ENCODE measurements at regions of chr4 and their contacts with region 1.

Region 1: GRCh38 chr4:10151182-10151581 is 34.6 kb upstream of the WDR1 start:
- DNase-seq: peak; percentile 86
- ATAC-seq: peak; percentile 94
- H3K4me3 ChIP-seq: no peak overlapping the region
- H3K4me3 Mint-ChIP-seq: peak overlapping the region; percentile 17
- H3K27ac ChIP-seq: no peak overlapping the region
- H3K27ac Mint-ChIP-seq: peak overlapping the region; percentile 23
- H3K4me1 ChIP-seq: peaks cover 20% of the 10 kb centered on the region in 2 donors
- H3K4me1 Mint-ChIP-seq: peaks cover 30% of the 10 kb centered on the region
- H3K27me3 ChIP-seq: peaks cover 0 to 28% (median 12%) of the 10 kb centered on the region in 4 experiments
- H3K27me3 Mint-ChIP-seq: peaks cover 40% of the 10 kb centered on the region
- CTCF ChIP-seq: no peak

Region 2: DNA sequence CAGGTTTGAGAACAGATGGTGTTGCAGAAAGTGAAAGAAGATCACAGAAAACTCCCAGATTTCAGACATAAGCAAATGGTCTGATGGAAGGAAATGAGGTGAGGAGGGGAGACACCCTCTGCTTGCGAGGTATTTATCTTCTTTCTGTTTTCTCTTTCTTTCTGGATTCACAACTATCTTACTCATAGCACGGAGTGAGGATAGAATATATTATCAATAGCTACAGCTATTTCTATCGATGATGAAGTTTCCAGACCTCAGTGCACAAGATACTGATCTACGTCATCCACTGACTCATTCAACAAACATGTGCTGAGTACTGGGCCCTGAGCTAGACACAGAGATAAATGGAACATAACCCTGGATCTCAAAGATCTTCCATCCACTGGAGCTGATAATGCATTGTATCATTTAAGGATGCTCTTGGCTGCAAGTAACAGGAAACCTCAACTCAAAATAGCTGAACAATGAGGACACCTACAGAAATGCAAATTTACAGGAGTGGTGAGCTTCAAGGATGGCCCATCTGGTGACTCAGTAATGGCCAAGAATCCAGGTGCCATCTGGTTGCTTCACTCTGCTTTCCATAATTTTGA is 151.1 kb before region 1 on chr4:
- CTCF ChIA-PET with region 1: no interaction called
- POLR2A ChIA-PET with region 1: no interaction called
- intact Hi-C with region 1: no loop called
- DNase-seq: no peak
- ATAC-seq: no peak
- H3K4me3 ChIP-seq: no peak overlapping the region
- H3K4me3 Mint-ChIP-seq: no peak overlapping the region
- H3K27ac ChIP-seq: no peak overlapping the region
- H3K27ac Mint-ChIP-seq: no peak overlapping the region
- H3K4me1 ChIP-seq: peaks cover 0 to 5% of the 10 kb centered on the region in 2 donors
- H3K4me1 Mint-ChIP-seq: peaks cover 10% of the 10 kb centered on the region
- H3K27me3 ChIP-seq: no peaks in the 10 kb centered on the region
- H3K27me3 Mint-ChIP-seq: no peaks in the 10 kb centered on the region
- CTCF ChIP-seq: no peak

Region 3: GRCh38 chr4:10164877-10165283 is 13.7 kb after region 1 on chr4:
- CTCF ChIA-PET with region 1: interaction called, 21 read pairs
- POLR2A ChIA-PET with region 1: no interaction called
- intact Hi-C with region 1: no loop called
- DNase-seq: no peak
- ATAC-seq: no peak
- H3K4me3 ChIP-seq: no peak overlapping the region
- H3K4me3 Mint-ChIP-seq: no peak overlapping the region
- H3K27ac ChIP-seq: no peak overlapping the region
- H3K27ac Mint-ChIP-seq: no peak overlapping the region
- H3K4me1 ChIP-seq: no peaks in the 10 kb centered on the region
- H3K4me1 Mint-ChIP-seq: no peaks in the 10 kb centered on the region
- H3K27me3 ChIP-seq: peaks cover 0 to 2% (median 0%) of the 10 kb centered on the region in 4 experiments
- H3K27me3 Mint-ChIP-seq: peaks cover 26% of the 10 kb centered on the region
- CTCF ChIP-seq: peak; percentile 58

Region 4: GRCh38 chr4:10175626-10176025 is 24.4 kb after region 1 on chr4:
- CTCF ChIA-PET with region 1: no interaction called
- POLR2A ChIA-PET with region 1: no interaction called
- intact Hi-C with region 1: no loop called
- DNase-seq: no peak
- ATAC-seq: no peak
- H3K4me3 ChIP-seq: no peak overlapping the region
- H3K4me3 Mint-ChIP-seq: no peak overlapping the region
- H3K27ac ChIP-seq: no peak overlapping the region
- H3K27ac Mint-ChIP-seq: no peak overlapping the region
- H3K4me1 ChIP-seq: no peaks in the 10 kb centered on the region
- H3K4me1 Mint-ChIP-seq: no peaks in the 10 kb centered on the region
- H3K27me3 ChIP-seq: peaks cover 0 to 6% (median 0%) of the 10 kb centered on the region in 4 experiments
- H3K27me3 Mint-ChIP-seq: peaks cover 35% of the 10 kb centered on the region
- CTCF ChIP-seq: no peak